HepG2 (cell line): ENCODE measurements at regions of chr5 and their contacts with region 1.

Region 1: DNA sequence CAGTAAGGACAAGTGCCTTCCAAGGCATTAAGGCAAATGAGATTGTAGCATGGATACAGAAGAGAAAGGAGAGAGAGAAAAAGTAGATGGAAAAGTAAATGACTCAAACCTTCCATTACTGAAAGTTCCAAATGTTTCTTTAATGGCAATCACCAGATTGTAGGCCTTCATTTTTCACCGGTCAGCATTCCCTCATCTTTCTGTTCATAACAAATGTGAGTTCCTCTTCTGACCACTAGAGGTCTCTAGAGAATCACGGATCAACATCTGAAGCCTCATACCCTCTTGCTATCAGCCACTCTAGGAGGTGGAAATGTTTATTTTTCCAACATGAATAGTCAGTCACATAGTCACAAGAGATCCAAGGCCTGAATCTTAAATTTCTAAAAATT is 73.6 kb upstream of the RPS23 start:
- DNase-seq: peak; percentile 73
- ATAC-seq: peak; percentile 88
- H3K4me3 ChIP-seq: no peak overlapping the region
- H3K27ac ChIP-seq: no peak overlapping the region
- H3K4me1 ChIP-seq: peaks cover 22% of the 10 kb centered on the region
- H3K27me3 ChIP-seq: peaks cover 0 to 7% of the 10 kb centered on the region in 2 experiments; a peak in 1 of 5 replicates
- CTCF ChIP-seq: peak; percentile 88
- EP300 ChIP-seq: no peak; a peak in 1 of 4 replicates
- POLR2A ChIP-seq: no peak
- RAD21 ChIP-seq: peak; percentile 72

Region 2: GRCh38 chr5:82522897-82523296 is 171.1 kb after region 1 on chr5:
- CTCF ChIA-PET with region 1: no interaction called
- POLR2A ChIA-PET with region 1: no interaction called
- in situ Hi-C with region 1: no loop called
- intact Hi-C with region 1: loop called (anchors 10 kb)
- DNase-seq: peak; percentile 6
- ATAC-seq: no peak
- H3K4me3 ChIP-seq: no peak overlapping the region
- H3K27ac ChIP-seq: no peak overlapping the region
- H3K4me1 ChIP-seq: peaks cover 31% of the 10 kb centered on the region
- H3K27me3 ChIP-seq: no peaks in the 10 kb centered on the region
- CTCF ChIP-seq: no peak
- EP300 ChIP-seq: no peak
- POLR2A ChIP-seq: no peak
- RAD21 ChIP-seq: no peak

Region 3: DNA sequence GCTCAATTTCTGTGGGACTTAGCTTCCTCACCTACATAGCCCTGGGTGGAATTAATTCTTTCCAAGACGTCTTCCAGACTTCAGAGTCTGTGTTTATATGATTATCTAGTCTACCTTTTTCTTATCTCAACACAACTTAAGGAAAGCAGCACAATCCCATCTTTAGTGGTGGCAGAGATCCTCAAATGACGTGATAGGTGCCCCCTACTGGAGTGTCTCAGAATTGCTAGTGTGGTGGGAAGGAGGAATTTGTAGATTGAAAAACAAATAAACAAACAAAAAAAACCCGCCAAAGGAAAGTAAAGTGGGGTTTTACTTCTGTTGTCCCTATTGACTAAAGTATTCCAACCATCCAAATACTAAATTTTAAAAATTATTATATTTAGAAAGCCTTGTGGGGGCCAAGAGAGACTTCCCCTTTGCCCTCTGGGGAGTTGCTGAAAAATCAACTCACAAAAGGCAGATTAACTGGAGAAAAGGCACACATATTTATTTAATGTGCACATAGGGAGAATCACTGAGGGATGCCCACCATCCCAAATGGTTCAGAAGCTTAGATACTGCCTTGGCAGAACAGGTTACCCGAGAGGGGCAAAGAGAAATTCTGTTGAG is 442.2 kb after region 1 on chr5:
- CTCF ChIA-PET with region 1: interaction called, 10 read pairs
- POLR2A ChIA-PET with region 1: no interaction called
- in situ Hi-C with region 1: loop called (anchors 5 kb)
- intact Hi-C with region 1: loop called (anchors 1 kb)
- DNase-seq: peak; percentile 21
- ATAC-seq: no peak
- H3K4me3 ChIP-seq: no peak overlapping the region
- H3K27ac ChIP-seq: no peak overlapping the region
- H3K4me1 ChIP-seq: no peaks in the 10 kb centered on the region
- H3K27me3 ChIP-seq: no peaks in the 10 kb centered on the region
- CTCF ChIP-seq: peak; percentile 60
- EP300 ChIP-seq: no peak
- POLR2A ChIP-seq: no peak
- RAD21 ChIP-seq: no peak

Region 4: DNA sequence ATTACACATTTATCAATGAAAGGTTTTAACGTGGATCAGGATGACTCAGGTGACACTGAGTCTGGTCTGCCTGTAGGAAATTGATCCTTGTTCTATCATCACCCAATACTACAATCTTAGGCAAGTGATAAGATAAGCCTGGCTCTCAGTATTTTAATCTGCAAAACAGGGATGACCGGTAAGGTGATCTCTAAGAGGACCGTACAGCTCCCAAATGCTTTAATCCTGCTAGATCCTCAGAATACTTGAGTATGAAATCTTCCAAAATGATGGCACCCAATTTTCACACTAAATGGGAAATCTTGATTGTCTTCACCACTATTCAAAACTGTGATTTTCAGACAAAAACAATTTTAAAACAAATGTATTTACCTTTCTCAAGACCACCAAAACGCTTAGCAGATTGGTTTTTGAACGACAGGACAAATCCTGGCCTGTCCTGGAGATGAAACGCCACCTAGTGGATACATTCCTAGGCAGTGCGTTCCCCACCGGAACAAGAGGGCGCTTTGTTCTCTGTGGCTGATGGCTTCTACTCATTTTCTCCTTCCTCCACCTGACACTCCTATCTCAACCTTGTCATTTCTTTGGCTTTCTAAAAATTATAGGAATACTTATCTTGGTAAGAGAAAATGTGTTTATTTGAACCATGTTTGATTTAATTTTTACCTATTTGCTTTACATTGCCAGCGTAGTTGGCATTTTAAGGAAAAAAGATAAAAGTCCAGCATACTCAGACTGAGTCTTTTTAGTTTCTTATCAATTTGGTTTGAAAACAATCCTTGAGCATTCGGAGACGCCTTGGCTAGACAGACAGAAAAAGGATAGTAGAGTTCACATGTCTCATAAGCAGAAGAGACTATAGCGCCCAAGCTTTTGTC is 1078.6 kb after region 1 on chr5:
- CTCF ChIA-PET with region 1: interaction called, 5 read pairs
- POLR2A ChIA-PET with region 1: no interaction called
- in situ Hi-C with region 1: loop called (anchors 5 kb)
- intact Hi-C with region 1: loop called (anchors 5 kb)
- DNase-seq: peak; percentile 61
- ATAC-seq: peak; percentile 99
- H3K4me3 ChIP-seq: no peak overlapping the region
- H3K27ac ChIP-seq: no peak overlapping the region
- H3K4me1 ChIP-seq: no peaks in the 10 kb centered on the region
- H3K27me3 ChIP-seq: no peaks in the 10 kb centered on the region
- CTCF ChIP-seq: peak; percentile 90
- EP300 ChIP-seq: no peak
- POLR2A ChIP-seq: no peak
- RAD21 ChIP-seq: peak; percentile 66